ENCODE measurements at regions of chr17 and their contacts with region 1.

Region 1: DNA sequence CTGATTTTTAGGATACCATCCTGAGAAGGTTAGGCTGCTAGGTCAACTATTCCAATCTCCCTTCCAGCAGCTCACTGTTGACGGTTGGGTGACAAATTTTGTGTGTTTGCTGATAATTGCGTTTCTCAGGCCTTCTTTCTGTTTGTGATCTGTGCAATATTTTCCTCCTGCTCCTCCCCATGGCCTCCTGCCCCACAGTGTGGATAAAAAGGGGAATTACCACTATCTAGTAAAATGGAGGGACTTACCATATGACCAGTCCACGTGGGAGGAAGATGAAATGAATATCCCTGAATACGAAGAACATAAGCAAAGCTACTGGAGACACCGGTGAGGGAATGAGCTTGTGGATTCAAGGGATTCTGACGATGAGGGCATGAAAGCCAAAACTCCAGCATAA is 9.2 kb downstream of the CHD3 start:
- H3K4me3 ChIP-seq: no peak overlapping the region
- H3K27ac ChIP-seq: no peak overlapping the region
- H3K4me1 ChIP-seq: peaks cover under 1% of the 10 kb centered on the region; the same call in 1 of the 2 replicates
- CTCF ChIP-seq: peak; percentile 81

Region 2: DNA sequence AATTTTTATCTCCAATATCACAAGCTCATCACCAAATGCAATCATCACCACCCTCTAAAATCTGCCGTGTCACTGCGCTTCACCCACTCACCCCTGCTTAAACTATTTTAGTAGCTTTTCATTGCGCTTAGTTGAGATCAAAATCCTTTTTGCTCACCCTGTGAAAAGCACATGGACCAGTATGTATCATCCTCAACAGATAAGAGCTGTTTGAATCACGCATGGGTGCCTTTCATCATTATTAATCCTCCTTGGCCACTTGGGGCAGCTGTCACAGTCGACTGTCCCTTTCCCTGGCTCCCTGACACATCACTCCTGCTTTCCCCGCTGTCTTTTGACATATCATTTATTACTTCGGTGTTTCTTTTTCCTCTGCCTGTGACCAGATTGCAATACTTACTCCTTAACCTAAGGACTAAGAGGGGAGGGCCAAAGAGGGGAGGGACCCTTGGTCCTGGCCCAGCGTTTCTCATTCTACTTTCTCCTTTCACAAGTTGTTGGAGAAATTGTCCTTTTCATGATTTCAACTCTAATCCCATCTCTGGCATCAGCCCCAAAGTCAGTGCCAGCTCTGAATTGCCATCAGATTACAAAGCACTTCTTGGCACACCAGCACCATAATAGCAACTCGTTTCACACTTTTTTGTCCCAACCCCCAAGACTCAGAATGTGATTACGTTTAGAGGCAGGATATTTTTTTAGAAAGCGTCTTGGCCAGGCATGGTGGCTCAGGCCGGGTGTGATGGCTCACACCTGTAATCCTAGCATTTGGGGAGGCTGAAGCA is 72.4 kb before region 1 on chr17:
- CTCF ChIA-PET with region 1: interaction called, 11 read pairs
- POLR2A ChIA-PET with region 1: interaction called, 5 read pairs
- H3K4me3 ChIP-seq: no peak overlapping the region
- H3K27ac ChIP-seq: no peak overlapping the region
- H3K4me1 ChIP-seq: no peaks in the 10 kb centered on the region
- CTCF ChIP-seq: peak; percentile 73; the same call in 1 of the 2 replicates

Region 3: DNA sequence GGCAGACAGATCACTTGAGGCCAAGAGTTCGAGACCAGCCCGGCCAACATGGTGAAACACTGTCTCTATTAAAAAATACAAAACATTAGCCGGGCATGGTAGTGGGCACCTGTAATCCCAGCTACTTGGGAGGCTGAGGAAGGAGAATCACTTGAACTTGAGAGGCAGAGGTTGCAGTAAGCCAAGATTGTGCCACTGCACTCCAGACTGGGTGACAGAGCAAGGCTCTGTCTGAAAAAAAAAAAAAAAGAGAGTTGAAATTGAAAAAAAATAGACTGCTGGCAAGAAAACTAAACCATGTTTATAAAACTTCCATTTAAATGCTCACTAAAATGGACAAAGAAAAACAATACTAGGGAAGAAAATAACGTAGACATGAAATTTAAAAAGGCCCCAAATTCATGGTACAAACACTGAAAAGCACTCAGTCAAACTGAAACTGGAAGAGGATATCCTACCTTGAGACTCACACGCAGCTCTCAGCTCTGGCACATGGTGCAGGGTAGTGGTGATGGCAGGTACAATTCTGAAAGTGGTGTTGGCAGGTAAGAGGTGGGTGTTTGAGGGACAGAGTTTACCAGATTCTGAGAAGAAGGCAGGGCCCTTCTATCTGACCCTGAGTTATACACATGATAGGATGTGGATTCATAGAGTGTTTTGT is 53.5 kb after region 1 on chr17:
- CTCF ChIA-PET with region 1: no interaction called
- POLR2A ChIA-PET with region 1: no interaction called
- H3K4me3 ChIP-seq: no peak overlapping the region
- H3K27ac ChIP-seq: no peak overlapping the region
- H3K4me1 ChIP-seq: no peaks in the 10 kb centered on the region
- CTCF ChIP-seq: no peak

Measured in HEK293 (cell line).